Posterior vena cava (tissue), 2 donors: ENCODE measurements at regions of chr15 and their contacts with region 1.

Region 1: DNA sequence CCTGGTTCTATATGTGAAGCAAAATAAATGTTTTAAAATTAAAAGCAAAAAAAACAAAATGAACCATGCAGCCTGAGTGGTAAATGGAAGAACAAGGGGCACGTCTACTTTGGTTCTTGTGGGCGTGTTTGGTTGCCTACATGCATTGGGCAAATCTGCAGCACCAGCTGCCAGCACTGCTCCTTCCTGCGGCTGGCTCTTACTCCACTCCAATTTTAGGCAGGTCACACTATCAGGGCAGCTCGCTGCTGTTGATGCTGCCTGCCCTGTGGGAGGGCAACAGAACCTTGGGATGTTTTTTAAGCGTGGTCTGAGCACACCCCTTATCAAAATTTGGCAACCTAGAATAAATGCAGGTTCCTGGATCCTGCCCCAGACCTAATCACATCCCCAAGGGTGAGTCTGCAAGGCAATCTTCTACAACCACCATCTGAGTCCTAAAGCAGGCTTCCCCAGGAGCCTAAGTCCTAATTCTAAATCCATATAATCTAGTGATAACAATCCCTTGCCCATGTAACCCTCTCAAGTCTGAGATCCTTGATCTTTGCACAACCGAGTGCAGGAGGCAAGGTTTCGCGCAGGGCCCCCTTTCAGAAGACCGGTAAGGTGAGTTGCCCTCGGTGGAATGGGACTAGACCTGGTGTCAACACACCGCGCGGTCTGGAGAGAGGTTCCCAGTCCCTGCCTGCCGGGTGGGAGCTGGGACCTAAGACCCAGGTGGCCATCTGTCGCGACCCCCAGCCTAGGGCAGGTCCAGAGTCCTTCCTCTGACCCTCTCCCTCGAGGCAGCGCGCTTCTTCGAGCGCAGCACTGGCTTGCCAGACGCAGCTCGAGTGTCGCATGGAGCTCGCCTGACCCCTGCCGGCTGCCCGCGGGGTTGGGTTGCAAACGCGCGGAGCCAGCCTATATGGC is 15.9 kb downstream of the IVD start:
- DNase-seq: peak; percentile 94

Region 2: DNA sequence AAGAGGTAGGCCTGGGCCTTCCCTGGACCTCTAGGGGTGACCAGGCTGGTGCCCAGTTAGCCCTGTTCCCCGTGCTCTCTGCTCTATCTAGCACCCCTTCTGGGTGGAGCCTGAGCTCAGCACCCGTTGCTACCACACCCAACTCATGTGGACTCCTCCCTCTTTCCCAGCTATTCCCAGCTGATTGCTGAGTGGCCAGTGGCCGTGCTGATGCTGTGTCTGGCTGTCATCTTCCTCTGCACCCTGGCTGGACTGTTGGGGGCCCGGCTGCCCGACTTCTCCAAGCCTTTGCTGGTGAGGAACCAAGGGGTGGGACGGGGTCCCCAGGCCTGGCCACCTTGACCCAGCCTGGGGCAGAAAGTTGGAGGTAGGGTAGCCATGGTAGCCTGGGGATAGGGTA is 57.3 kb before region 1 on chr15:
- intact Hi-C with region 1: loop called in 1 of 2 experiments (anchors 2 kb)
- DNase-seq: no peak

Region 3: DNA sequence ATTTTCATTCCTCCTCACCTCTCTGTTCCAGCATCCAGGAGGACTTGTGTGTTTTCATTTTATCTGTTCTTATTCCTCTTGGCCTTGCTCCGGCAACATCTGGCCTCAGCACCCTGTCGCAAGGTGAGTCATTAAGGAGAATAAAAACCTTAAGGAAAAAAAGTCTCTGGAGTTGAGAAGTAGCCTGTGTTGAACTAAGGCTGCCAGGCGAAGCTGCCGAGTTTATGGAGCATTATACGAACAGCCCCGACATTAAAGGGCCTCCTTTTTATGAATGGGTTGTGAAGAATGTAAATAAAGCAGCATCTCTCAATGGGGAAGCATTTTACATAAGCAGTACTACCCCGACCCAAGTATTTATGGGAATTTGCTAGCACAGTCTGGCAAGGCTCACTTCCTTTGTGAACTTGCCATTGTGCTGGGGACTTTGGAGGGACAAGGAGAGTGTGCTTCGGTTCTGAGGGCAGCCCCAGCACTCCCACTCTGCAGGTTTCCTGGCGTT is 24.0 kb after region 1 on chr15:
- intact Hi-C with region 1: loop called in 1 of 2 experiments (anchors 1 kb)
- DNase-seq: no peak

Region 4: DNA sequence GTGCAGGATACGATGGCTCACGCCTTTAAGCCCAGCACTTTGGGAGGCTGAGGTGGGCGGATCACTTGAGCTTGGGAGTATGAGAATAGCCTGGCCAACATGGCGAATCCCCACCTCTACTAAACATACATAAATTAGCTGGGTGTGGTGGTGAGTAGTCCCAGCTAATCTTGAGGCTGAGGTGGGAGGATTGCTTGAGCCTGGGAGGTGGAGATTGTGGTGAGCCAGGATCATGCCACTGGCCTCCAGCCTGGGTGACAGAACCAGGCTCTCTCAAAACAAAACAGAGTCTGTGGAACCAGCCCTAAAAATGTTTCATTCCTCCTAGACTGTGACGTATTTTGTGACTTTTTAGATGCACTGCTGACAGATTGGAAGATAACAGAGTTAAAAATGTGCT is 239.2 kb after region 1 on chr15:
- intact Hi-C with region 1: loop called in 1 of 2 experiments (anchors 5 kb)
- DNase-seq: no peak

Region 5: GRCh38 chr15:40769274-40770146 is 348.0 kb after region 1 on chr15 and contains the start of gene C15orf62:
- intact Hi-C with region 1: no loop called
- DNase-seq: no peak
- total RNA-seq, gene C15orf62: 0.10 to 0.28 TPM